Activated CD8-positive, alpha-beta T cell treated with anti-CD3 and anti-CD28 coated beads, Interleukin-2, amount 10 ng/mL, durations not matched to agents 7 days and 5 days (primary cell): ENCODE measurements at regions of chr10 and their contacts with region 1.

Region 1: DNA sequence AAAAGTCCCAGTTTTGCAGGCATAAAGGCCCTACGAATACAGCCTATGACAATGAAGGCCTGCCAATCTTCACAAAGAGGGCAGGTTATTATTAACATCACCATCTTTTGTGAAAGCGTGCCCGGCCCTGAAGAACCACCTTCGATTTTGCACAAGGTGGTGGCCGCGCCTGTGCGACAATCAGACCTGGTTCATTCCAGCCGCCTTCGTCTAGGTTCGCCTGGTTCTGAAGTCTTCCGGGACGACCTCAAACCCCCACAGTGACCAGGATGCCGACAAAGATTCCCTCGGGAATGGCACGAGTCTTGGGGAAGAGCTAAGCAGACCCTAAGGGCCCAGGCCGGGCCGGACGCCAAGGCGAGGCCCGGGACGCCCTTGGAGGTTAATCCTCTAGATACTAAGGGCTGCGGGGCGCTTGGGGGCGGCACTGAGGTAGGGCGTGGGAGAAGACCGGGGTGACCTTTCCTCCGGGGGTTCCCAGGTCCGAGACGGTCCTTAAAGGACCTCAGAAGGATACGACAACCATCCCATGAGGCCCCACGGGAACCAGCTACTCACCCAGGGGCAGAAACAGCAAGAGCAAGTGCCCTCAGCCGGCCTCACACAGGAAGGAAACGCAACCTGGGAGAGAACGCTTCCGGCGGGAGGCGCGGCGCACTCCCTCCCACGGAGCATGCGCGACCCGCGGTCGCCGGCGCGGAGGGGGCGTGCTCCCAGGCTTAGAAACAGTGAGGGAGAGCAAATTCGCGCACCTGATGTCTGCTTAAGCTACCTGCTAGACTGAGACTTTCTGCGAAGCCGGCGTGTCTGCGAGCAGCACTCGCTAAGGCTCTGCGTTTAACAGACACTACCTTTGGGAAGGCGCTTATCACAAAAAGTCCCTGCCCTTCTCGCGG is at the start of gene ATAD1:
- DNase-seq: peak; percentile 92
- ATAC-seq: peak; percentile 94
- H3K4me3 Mint-ChIP-seq: peak within 1 kb of the TSS; percentile 99
- H3K27ac Mint-ChIP-seq: peak within 1 kb of the TSS; percentile 97
- H3K4me1 Mint-ChIP-seq: peaks cover 34% of the 10 kb centered on the region
- H3K27me3 Mint-ChIP-seq: peaks cover 2% of the 10 kb centered on the region
- total RNA-seq, gene ATAD1: 38.9 to 42.5 TPM

Region 2: DNA sequence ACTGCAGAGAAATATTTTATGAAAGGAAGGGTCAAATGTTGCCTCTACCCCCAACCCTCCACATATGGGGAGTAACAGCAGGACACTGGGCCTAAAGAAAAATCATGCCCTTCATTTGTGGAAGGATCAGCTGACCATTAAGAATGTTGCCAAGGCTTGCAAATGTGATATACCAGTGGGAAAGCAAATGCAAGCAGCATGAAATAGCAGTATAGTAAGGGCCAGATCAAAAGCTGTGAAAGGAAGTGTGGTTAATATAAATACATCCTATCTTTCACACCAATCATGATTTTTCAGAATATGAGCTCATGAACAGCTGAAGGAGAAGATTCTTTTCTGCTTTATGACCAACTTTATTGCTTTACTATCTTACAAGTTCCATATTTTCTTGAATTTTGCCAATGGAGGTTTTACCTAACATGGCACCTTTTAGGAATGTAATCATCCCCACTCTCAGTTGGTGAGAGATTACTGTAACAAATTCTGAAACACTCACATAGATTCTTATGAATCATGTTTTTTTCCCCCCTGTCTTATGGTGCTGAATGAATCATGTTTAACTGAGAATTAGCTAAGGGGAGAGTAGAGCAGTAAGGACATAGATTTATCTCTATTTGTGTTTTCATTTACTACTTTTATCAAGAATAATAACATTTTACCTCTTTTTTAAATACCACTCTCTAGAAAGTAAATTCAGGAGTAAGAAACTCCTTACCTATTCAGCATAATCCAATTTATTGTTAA is 12.3 kb after region 1 on chr10:
- CTCF ChIA-PET with region 1: interaction called, 25 read pairs
- POLR2A ChIA-PET with region 1: interaction called, 20 read pairs
- DNase-seq: no peak
- ATAC-seq: no peak
- H3K4me3 Mint-ChIP-seq: no peak overlapping the region
- H3K27ac Mint-ChIP-seq: no peak overlapping the region
- H3K4me1 Mint-ChIP-seq: peaks cover 16% of the 10 kb centered on the region
- H3K27me3 Mint-ChIP-seq: peaks cover 2% of the 10 kb centered on the region

Region 3: DNA sequence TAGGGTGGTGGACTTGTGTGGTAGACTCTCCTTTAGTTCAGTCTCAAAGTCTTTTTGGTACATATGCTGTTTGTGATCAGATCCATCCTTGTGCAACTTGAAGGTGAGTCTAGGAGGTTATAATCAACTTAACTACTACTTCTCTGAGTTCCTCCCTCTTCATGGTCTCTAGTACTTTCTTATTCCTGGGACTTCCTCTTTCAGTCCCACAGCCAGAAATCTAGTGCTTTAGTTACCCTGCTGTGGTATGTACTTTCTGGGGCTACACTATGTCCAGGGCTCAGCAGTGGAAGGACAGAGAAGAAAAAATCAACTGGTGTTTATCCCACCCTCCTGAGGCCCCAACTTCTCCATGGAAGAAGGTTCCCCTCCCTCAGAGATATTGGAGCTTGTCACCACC is 19.6 kb after region 1 on chr10:
- CTCF ChIA-PET with region 1: interaction called, 10 read pairs
- POLR2A ChIA-PET with region 1: interaction called, 6 read pairs
- DNase-seq: no peak
- ATAC-seq: no peak
- H3K4me3 Mint-ChIP-seq: no peak overlapping the region
- H3K27ac Mint-ChIP-seq: no peak overlapping the region
- H3K4me1 Mint-ChIP-seq: peaks cover 3% of the 10 kb centered on the region
- H3K27me3 Mint-ChIP-seq: peaks cover 2% of the 10 kb centered on the region

Region 4: DNA sequence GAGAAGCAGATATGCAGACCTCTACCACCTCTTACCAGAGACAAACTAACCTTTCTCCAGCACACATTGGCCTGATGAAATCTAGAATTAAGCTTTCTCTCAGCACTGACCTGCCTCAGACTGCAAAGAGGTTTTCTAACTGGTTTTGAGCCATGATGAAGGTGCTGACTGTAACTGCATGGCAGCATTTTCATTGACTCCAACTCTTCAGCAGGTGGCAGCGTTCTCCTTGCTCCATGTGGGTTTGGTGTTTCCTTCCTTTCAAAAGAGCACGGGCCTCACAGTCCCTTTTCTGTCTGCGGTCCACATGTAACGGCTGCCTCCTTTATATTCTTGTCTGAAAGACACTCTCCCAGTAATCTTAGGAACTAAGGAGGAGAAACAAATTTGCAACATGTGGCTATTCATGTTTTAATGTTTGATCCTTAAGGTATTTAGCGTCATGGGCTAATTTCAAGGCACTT is 32.9 kb after region 1 on chr10:
- CTCF ChIA-PET with region 1: interaction called, 11 read pairs
- POLR2A ChIA-PET with region 1: no interaction called
- DNase-seq: peak; percentile 74
- ATAC-seq: peak; percentile 94
- H3K4me3 Mint-ChIP-seq: no peak overlapping the region
- H3K27ac Mint-ChIP-seq: no peak overlapping the region
- H3K4me1 Mint-ChIP-seq: peaks cover 22% of the 10 kb centered on the region
- H3K27me3 Mint-ChIP-seq: no peaks in the 10 kb centered on the region

Region 5: GRCh38 chr10:87961046-87961713 is 143.3 kb after region 1 on chr10:
- CTCF ChIA-PET with region 1: no interaction called
- POLR2A ChIA-PET with region 1: no interaction called
- DNase-seq: no peak
- ATAC-seq: no peak
- H3K4me3 Mint-ChIP-seq: no peak overlapping the region
- H3K27ac Mint-ChIP-seq: no peak overlapping the region
- H3K4me1 Mint-ChIP-seq: no peaks in the 10 kb centered on the region
- H3K27me3 Mint-ChIP-seq: no peaks in the 10 kb centered on the region